ENCODE measurements at regions of chr3 and their contacts with region 1.

Region 1: GRCh38 chr3:168847291-168847883 is 751.7 kb upstream of the GOLIM4 start:
- DNase-seq: no peak
- H3K4me3 ChIP-seq: no peak overlapping the region
- H3K27ac ChIP-seq: no peak overlapping the region
- H3K4me1 ChIP-seq: no peaks in the 10 kb centered on the region
- H3K27me3 ChIP-seq: no peaks in the 10 kb centered on the region
- CTCF ChIP-seq: peak in 1 of 3 experiments; percentile 25
- POLR2A ChIP-seq: no peak

Region 2: GRCh38 chr3:168213920-168214319 is 633.5 kb before region 1 on chr3:
- intact Hi-C with region 1: loop called (anchors 10 kb)
- DNase-seq: no peak
- H3K4me3 ChIP-seq: no peak overlapping the region
- H3K27ac ChIP-seq: no peak overlapping the region
- H3K4me1 ChIP-seq: no peaks in the 10 kb centered on the region
- H3K27me3 ChIP-seq: no peaks in the 10 kb centered on the region
- CTCF ChIP-seq: no peak
- POLR2A ChIP-seq: no peak

Region 3: DNA sequence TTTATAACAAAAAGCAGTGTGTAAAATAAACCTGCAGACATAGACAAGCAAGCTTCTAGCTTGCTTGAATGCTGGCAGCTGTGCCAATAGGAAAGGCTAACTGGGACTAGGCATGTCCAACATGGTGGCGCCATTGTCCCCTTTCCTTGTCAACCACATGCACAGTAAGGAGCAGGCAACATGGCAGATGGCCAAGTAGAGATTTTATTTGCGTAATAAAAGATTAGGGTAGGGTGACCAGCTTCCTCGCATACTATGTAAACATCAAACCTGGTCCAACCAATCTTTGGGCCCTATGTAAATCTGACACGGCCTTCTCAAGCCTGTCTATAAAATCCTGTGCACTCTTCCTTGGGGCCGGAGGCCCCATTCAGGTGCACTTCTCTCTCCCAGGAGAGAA is 176.3 kb before region 1 on chr3:
- intact Hi-C with region 1: no loop called
- DNase-seq: no peak
- H3K4me3 ChIP-seq: no peak overlapping the region
- H3K27ac ChIP-seq: no peak overlapping the region
- H3K4me1 ChIP-seq: no peaks in the 10 kb centered on the region
- H3K27me3 ChIP-seq: no peaks in the 10 kb centered on the region
- CTCF ChIP-seq: no peak
- POLR2A ChIP-seq: no peak

Region 4: DNA sequence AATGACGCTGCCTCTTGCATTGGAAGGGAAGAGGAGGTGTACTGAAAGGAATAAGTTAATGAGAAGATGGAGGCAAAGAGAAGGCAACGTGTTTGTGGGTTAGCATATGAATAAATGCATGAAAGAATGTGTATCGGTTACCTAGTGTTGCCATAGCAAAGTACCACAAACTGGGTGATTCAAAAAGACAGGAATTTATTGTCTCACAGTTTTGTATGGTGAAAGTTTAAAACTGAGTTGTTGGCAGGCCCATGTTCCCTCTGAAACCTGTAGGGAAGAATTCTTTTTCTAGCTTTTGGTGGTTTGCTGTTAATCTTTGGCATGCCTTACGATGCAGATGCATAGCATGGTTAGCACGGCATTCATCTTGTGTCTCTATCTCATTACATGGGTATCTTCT is 86.2 kb after region 1 on chr3:
- intact Hi-C with region 1: no loop called
- DNase-seq: no peak
- H3K4me3 ChIP-seq: no peak overlapping the region
- H3K27ac ChIP-seq: no peak overlapping the region
- H3K4me1 ChIP-seq: no peaks in the 10 kb centered on the region
- H3K27me3 ChIP-seq: no peaks in the 10 kb centered on the region
- CTCF ChIP-seq: no peak
- POLR2A ChIP-seq: no peak

Region 5: DNA sequence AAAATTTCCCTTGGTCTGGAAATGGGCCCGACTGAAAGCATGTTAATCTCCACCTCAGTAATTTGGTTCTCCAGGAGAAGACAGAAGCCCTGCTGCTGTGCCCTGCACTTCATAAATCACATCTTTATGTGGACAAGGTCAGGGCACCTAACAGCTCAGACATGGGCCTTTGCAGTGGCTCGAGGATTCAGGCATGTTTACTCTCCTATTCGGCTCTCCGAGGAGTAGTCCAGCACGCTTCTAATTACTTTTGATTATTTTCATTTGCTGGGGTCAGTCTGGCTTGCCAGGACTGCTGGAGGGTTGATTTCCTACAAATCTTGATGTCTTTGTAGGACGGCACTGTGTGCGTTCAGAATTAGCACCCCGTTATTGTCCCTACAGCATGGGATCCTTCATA is 304.9 kb after region 1 on chr3:
- intact Hi-C with region 1: no loop called
- DNase-seq: no peak
- H3K4me3 ChIP-seq: no peak overlapping the region
- H3K27ac ChIP-seq: no peak overlapping the region
- H3K4me1 ChIP-seq: no peaks in the 10 kb centered on the region
- H3K27me3 ChIP-seq: peaks cover 4% of the 10 kb centered on the region
- CTCF ChIP-seq: no peak
- POLR2A ChIP-seq: no peak